Uterus (tissue), 4 donors: ENCODE measurements at regions of chr1 and their contacts with region 1.

Region 1: GRCh38 chr1:207828485-207829158 is 76.8 kb downstream of the CD46 start:
- DNase-seq: peak; percentile 75 to 78
- H3K4me3 ChIP-seq: no peak overlapping the region
- H3K27ac ChIP-seq: peak overlapping the region; percentile 95 to 97
- H3K4me1 ChIP-seq: peaks cover 21% of the 10 kb centered on the region in 2 donors
- H3K27me3 ChIP-seq: no peaks in the 10 kb centered on the region
- CTCF ChIP-seq: peak; percentile 77 to 92 (median 88)
- POLR2A ChIP-seq: no peak

Region 2: GRCh38 chr1:207868774-207869721 is 40.4 kb after region 1 on chr1:
- intact Hi-C with region 1: loop called (anchors 5 kb)
- DNase-seq: peak; percentile 70 to 88
- H3K4me3 ChIP-seq: peak overlapping the region; percentile 63 to 96
- H3K27ac ChIP-seq: peak overlapping the region; percentile 93 to 95
- H3K4me1 ChIP-seq: peaks cover 0 to 23% of the 10 kb centered on the region in 2 donors
- H3K27me3 ChIP-seq: no peaks in the 10 kb centered on the region
- CTCF ChIP-seq: peak; percentile 52 to 99 (median 94)
- POLR2A ChIP-seq: peak; percentile 61 to 78